ENCODE measurements at regions of chr1 and their contacts with region 1.

Region 1: GRCh38 chr1:97875996-97876395 is 44.8 kb downstream of the DPYD start:
- DNase-seq: no peak
- ATAC-seq: no peak

Region 2: GRCh38 chr1:97778718-97779117 is 97.3 kb before region 1 on chr1:
- intact Hi-C with region 1: loop called in 1 of 2 experiments (anchors 5 kb)
- DNase-seq: no peak
- ATAC-seq: no peak

Measured in left colon (tissue), 2 donors.